ENCODE measurements at regions of chr9 and their contacts with region 1.

Region 1: DNA sequence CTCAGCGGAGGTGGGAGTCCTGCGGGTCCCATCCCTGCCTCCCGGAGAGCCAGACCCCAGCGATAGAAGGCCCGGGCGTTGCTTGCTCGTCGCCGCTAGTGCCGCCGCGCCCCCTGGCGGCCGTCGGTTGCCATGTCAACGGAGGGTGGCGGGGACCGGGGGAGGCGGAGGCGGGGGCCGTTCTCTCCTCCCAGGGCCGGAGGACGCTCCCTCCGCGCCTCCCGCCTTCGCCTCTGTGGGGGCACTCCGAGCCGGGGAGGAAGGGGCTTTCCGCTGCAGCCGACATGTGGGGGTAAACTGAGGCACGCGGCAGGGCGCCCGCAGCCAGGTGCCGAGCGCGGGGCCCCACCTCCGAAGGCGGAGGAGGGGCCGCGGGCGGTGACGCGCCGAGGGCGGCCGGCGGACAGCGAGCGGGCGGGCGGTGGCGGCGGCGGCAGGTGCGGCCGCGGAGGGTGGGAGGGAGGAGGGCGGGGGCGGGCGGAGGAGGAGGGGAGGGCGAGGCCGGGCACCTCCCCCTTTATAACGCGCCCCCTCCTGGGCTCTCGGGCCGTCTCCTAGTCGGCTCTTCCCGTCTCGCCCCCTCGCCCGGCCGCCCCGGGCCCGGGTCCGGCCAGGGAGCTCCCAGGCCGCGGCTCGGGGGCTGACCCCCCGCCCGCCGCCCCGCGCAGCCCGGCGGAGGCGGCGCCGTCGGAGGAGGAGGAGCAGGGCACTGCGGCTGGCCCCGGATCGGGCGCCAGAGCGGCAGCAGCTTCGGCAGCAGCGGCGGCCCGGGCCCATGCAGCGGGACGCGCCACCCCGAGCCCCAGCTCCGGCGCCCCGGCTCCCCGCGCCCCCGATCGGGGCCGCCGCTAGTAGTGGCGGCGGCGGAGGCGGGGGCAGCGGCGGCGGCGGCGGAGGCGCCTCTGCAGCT is 556 bp upstream of the CDK9 start:
- DNase-seq: peak; percentile 89
- H3K4me3 ChIP-seq: peak overlapping the region in 1 of 3 experiments; percentile 89
- H3K27ac ChIP-seq: peak overlapping the region; percentile 69
- H3K4me1 ChIP-seq: peaks cover 44% of the 10 kb centered on the region
- H3K27me3 ChIP-seq: no peaks in the 10 kb centered on the region
- CTCF ChIP-seq: peak; percentile 64 to 88
- POLR2A ChIP-seq: peak; percentile 24

Region 2: DNA sequence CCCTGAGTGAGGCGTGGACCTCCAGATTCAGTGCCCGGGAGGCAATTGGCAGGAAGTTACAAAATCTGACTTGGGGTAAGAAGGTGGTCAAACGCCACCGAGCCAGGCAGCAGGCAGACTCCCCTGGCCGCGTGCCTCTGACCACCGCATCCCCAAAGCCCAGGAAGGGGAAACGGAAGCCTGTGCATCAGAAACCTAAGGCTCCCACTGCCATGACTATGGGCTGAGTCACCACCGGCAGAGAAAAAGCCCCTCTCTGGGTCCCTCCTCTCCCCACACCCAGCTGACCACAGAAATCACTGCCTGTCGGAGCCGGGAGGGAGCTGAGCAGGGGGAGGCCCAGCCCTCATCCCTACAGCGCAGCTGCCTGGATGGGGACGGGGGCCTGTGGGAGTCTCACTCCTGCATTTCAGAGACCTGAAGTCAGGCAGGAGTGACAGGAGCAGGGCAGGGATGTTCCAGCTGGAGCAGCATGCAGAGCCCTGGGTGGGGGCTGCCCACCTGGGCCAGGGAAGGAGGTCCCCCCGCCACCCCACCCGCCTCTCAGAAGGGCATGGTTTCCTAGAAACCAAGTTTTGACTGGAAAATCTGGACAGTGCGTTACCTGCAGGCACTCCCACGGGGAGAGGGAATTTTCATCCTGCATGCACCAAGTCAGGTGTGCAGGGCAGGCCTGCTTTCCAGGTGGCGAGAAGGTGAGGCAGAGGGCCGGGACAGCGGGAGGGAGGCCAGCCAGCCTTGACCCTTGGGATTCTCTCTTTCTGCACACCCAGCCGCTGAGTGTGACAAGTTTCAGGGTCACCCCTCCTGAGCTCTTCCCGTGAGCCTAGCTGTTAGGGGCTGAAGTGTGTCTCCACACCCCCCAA is 265.7 kb before region 1 on chr9:
- CTCF ChIA-PET with region 1: no interaction called
- POLR2A ChIA-PET with region 1: no interaction called
- dilution Hi-C with region 1: no loop called
- intact Hi-C with region 1: loop called (anchors 5 kb)
- DNase-seq: peak; percentile 95
- H3K4me3 ChIP-seq: no peak overlapping the region
- H3K27ac ChIP-seq: peak overlapping the region; percentile 99
- H3K4me1 ChIP-seq: peaks cover 46% of the 10 kb centered on the region
- H3K27me3 ChIP-seq: no peaks in the 10 kb centered on the region
- CTCF ChIP-seq: no peak
- POLR2A ChIP-seq: no peak

Region 3: GRCh38 chr9:127754099-127755050 is 30.9 kb before region 1 on chr9:
- CTCF ChIA-PET with region 1: interaction called, 16 read pairs
- POLR2A ChIA-PET with region 1: interaction called, 3 read pairs
- dilution Hi-C with region 1: no loop called
- intact Hi-C with region 1: no loop called
- DNase-seq: no peak
- H3K4me3 ChIP-seq: no peak overlapping the region
- H3K27ac ChIP-seq: no peak overlapping the region
- H3K4me1 ChIP-seq: peaks cover 12% of the 10 kb centered on the region
- H3K27me3 ChIP-seq: no peaks in the 10 kb centered on the region
- CTCF ChIP-seq: no peak
- POLR2A ChIP-seq: no peak

Region 4: DNA sequence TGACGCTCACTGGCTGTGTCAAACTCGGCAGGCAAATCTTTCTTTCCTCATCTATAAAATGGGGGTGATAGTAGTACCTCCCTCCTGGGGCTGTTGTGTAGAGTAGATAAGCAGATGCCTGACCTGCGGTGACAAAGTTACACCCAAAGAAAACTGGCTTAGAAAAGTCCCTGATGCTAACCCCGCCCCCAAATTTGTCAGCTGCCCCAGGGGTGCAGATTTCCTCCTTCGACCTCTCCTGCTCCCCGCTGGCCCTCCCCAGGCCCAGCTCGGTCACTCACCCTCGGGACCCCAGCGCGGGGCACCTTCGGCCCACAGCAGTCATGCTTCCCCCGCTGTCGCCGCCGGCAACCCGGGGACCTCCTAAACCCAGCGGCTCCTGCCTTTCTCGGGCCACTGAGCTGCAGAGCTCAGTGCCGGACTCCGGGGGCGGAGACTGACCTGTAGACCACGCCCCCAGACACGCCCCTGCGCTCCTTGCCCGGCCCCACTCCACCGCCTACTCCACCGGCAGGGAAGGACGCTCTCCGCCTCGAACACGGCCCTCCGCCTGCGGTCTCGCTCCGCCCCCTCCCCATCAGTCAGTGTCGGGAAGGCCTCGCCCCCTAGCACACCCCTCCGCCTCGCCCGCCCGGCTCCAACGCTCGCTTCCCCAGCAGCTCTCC is 14.2 kb before region 1 on chr9:
- CTCF ChIA-PET with region 1: interaction called, 167 read pairs
- POLR2A ChIA-PET with region 1: interaction called, 24 read pairs
- dilution Hi-C with region 1: no loop called
- intact Hi-C with region 1: loop called (anchors 1 kb)
- DNase-seq: peak; percentile 99
- H3K4me3 ChIP-seq: peak overlapping the region; percentile 35 to 79 (median 75)
- H3K27ac ChIP-seq: peak overlapping the region; percentile 96
- H3K4me1 ChIP-seq: peaks cover 39% of the 10 kb centered on the region
- H3K27me3 ChIP-seq: no peaks in the 10 kb centered on the region
- CTCF ChIP-seq: no peak
- POLR2A ChIP-seq: peak; percentile 93

Region 5: GRCh38 chr9:127916665-127917613 is 131.7 kb after region 1 on chr9 and contains the start of gene ST6GALNAC4:
- CTCF ChIA-PET with region 1: interaction called, 8 read pairs
- POLR2A ChIA-PET with region 1: no interaction called
- dilution Hi-C with region 1: no loop called
- intact Hi-C with region 1: loop called (anchors 1 kb)
- DNase-seq: peak; percentile 89
- H3K4me3 ChIP-seq: peak within 1 kb of the TSS; percentile 59 to 77 (median 71)
- H3K27ac ChIP-seq: peak within 1 kb of the TSS; percentile 55
- H3K4me1 ChIP-seq: peaks cover 39% of the 10 kb centered on the region
- H3K27me3 ChIP-seq: no peaks in the 10 kb centered on the region
- CTCF ChIP-seq: no peak
- POLR2A ChIP-seq: peak; percentile 82
- total RNA-seq, gene ST6GALNAC4: 38.1 and 45.9 TPM in 2 replicates